ENCODE measurements at regions of chr15 and their contacts with region 1.

Region 1: DNA sequence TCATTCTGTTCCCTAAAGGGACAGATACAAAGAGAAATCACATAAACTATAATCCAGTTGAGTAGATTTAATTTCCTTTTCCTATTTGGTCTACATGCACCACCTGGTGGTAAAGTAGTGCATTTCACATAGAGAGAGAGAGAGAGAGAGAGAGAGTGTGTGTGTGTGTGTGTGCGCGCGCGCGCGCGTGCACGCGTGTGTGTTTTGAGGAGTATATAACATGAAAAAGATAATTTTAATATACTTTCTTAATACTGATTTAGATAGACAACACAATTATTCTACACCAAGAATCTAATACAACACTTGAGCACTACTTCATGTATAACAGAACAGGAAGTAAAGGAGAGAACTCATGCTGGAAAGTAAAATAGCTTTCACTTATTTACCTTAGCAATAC is 1.1 kb upstream of the FGF7 start:
- DNase-seq: peak in 1 of 2 donors; percentile 54
- ATAC-seq: peak; percentile 72

Region 2: DNA sequence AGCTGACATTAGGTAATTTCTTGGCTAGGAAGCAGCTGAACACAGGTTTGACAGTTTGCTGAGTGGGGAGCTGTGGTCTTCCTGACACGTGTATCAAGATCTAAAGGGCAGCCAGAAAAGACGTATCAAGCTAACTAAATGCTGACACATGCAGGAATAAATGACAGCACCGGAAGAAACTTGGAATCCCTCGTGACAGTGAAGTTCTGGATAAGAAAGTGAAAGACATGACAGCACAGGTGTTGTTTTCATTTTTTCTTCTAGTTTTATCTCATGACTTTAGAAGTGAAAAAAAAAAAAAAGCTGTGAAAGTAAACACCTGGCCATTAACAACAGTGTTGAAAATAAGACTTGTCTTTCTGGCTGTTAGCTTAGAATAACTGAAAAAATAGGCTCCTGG is 49.7 kb after region 1 on chr15:
- intact Hi-C with region 1: no loop called
- DNase-seq: no peak
- ATAC-seq: no peak

Region 3: GRCh38 chr15:49620658-49621368 is 198.8 kb after region 1 on chr15 and contains the starts of genes DTWD1 and FAM227B:
- intact Hi-C with region 1: loop called in 1 of 2 experiments (anchors 10 kb)
- DNase-seq: peak; percentile 97 to 98
- ATAC-seq: peak; percentile 97
- total RNA-seq, gene DTWD1: 17.1 to 17.8 TPM
- total RNA-seq, gene FAM227B: 1.2 to 3.3 TPM

Region 4: DNA sequence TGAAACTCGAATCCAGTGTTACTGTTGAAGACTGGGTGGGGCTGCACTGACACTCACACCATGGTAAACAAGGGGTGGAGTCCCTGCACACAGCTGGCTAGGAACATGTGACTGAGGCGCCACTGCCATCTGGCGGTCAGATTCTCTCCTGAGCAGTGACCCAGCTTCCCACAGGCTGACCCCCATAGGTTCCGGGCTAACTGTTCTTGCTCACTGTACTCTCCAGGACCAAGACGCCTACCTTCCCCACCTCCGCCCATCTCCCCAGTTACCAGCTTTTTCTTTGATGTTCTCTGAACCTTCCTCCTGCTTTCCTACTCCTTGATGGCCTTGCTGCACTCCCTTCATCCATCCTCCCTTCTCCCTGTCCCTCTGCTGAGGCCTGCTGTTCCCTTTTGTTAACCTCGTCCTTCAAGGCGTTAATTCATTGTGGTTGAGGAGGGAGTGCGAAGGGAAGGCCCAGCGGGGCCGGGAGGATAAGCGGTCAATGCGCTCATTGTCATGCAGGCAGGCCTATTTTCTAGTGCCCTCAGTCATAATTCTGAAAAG is 581.9 kb after region 1 on chr15:
- intact Hi-C with region 1: loop called in 1 of 2 experiments (anchors 10 kb)
- DNase-seq: peak; percentile 83 to 92
- ATAC-seq: peak; percentile 100

Measured in left colon (tissue), 2 donors.